ENCODE measurements at regions of chr4 and their contacts with region 1.

Region 1: GRCh38 chr4:8241895-8242696 is 27.5 kb upstream of the HTRA3 start:
- DNase-seq: peak; percentile 93

Region 2: GRCh38 chr4:7673121-7673520 is 569.0 kb before region 1 on chr4:
- intact Hi-C with region 1: no loop called
- DNase-seq: no peak

Region 3: GRCh38 chr4:8015512-8015911 is 226.6 kb before region 1 on chr4:
- intact Hi-C with region 1: no loop called
- DNase-seq: no peak

Region 4: DNA sequence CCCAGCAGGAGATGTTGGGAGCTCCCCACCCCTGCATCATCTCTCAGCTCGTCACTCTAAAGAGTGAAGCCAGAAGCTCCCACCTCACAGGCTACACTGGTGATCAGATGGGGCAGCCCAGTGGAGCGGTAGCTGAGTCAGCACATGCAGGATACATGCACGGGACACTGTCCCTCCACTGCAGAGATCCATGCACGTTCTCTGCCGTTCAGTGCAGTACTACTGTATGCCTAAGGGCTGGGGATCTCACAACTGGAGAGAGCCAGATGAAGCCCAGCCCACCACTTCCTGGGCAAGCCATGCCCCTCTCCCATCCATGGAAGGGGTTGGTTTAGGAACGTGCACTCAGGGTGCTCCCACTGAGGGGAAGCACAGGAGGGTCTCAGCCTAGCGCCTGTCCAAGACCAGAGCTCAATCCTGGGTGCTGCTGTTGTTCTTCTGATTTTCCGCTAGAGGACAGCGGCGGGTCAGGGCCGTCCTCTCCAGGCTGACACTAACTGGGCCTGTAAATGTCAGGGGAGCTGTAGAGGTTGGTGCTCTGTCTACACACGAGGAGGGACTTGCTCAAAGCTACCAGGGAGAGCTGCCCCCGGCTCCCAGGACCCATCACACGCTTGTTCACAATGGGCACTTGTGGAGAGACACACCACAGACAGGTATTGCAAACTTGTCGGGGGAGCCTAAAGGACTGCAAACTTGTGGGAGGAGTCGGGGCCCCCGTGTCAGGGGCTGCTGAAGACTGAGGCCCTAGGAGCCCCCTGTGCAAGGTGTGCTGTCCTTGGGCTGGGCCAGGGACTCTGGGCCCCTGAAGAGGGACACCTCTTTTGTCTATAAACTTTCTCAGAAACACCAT is 65.3 kb before region 1 on chr4:
- intact Hi-C with region 1: loop called (anchors 5 kb)
- DNase-seq: no peak

Region 5: DNA sequence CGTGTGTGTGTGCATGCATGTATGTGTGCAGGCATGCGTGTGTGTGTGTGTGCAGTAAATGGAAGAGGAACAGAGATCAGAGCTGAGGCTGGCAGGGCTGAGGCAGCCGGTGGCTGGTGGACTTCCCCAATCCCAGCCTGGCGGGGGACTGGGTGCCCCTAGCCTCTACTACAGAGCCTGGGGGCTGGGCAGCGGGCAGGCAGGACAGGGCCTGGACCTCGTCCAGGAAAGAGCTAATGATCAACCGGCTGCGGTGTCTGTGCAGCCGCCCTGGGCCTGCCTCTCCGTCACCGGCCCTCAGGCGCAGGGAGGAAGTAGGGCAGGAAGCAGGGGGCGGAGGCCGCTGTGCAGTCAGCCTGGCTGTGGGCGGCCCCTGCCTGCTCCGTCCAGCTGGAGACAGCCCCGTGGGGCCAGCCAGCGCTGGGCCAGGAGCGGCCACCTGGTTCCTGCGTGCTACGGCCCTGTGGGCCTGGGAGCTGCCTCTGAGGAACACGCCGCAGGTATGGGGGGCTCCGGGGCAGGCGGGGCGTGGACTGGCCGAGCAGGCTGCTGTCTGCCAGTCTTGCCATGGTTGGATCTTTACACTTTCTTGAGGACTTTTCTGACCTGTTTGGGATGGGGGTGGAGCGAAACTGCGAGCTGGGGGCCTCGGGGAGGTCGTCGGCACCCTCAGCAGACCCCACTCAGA is 43.0 kb before region 1 on chr4 and contains the start of gene SH3TC1:
- intact Hi-C with region 1: no loop called
- DNase-seq: peak; percentile 96
- total RNA-seq, gene SH3TC1: 16.5 TPM

Region 6: GRCh38 chr4:8267077-8267476 is 25.0 kb after region 1 on chr4:
- intact Hi-C with region 1: loop called (anchors 2 kb)
- DNase-seq: peak; percentile 86

Region 7: DNA sequence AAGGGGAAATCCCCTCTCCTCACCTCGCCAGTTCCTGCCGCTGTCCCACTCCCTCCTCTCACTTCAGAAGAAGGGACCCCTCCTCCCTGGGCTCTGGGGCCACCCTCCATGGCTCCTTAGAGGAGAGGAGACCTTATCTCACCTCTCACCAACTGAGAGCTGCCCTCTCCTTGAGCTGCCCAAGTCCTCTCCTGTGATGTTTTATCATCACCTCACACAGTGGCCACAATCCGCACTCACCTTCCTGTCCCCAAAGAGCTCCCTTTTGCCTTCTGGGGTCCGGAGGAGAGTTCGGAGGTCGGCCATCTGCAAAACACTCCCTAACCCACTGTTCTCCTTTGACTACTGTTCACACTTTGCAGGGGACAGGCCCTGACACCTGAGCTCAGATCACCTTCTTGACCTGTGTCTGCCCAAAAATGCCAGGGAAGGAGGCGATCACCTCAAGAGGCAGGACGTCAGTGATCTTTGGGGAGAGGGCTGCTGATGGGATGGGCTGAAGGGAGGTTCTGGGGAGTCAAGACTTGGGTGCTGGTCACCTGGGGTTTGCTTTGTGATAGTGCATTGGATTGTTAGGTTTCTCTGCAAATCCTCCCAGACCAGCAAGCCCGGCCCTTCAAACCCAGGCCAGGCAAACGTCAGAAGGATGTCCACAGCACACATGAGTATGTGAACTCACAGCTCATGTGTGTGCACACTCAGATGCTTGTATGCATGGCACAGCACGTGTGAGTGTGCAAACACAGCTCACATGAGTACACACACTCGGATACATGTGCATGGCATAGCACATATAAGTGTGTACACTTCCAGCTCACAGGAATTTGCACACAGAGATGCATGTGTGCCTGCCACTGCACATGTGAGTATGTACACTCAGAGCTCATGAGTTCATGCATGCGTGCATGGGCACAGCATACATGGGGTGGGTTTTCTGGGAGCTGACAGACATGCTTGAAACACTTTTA is 69.3 kb after region 1 on chr4:
- intact Hi-C with region 1: loop called (anchors 2 kb)
- DNase-seq: no peak

Region 8: DNA sequence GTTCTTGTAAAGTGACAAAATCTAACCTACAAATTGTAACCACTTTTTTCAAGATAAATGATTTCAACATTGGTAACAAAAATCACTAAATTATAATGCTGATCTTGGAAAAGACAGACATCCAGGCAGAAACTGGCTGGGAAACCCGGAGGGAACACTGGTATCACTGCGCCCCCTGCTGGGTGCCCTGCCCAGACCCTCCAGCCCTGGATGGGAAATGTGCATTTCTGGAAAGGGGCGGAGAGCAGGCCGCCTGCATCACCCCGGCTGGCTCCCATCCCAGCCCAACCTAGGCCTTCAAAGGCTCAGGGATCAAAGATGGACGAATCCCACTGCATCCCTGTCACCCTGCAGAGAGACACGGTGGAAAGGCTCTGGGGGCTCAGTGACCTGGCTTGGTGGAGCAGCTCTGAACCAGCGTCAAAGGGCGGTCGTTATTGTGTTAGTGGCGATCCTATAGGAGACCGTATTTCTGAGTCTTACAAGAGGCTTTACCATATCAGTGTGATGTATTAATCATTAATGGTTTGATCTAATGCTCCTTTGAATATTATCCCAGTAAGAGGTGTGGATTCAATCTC is 161.2 kb after region 1 on chr4:
- intact Hi-C with region 1: loop called (anchors 1 kb)
- DNase-seq: peak; percentile 94

Region 9: DNA sequence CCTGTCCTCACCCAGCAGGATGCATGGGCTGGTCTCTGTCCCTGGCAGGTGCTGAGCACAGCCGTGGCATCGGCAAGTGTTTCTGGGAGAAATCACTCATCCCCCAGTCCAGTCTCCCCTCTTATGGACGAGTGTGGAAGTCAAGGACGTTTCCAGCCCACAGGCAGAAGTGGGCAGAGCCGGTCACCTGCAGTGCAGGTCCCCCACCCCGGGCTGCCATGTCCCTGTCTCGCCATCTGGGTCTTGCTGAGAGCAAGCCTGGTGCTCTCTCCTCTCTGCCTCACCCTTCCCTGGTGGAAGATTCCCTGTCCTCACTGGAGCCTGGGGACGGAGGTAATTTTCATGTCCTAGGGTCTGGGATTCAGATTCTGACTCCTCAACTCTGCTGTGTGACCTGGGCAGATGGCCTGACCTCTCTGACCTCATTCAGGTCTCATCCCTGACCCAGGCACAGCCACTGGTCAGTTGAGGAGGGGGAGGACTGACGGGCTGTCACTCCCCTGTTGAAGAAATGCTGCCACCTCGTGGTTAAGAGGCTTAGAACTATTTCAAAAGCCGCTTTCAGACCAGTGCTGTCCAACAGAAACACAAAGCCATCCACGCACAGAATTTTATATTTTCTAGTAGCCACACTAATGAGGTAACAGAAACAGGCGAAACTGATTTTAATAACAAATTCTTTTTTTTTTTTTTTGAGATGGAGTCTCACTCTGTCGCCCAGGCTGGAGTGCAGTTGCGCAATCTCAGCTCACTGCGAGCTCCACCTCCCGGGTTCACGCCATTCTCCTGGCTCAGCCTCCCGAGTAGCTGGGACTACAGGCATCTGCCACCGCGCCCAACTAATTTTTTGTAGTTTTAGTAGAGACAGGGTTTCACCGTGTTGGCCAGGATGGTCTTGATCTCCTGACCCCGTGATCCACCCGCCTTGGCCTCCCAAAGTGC is 352.3 kb after region 1 on chr4:
- intact Hi-C with region 1: loop called (anchors 5 kb)
- DNase-seq: no peak